WTC11 (cell line): ENCODE measurements at regions of chr2 and their contacts with region 1.

Region 1: GRCh38 chr2:27016801-27017325 is 15.9 kb upstream of the TMEM214 start:
- DNase-seq: peak; percentile 83
- ATAC-seq: peak; percentile 92
- H3K4me3 Mint-ChIP-seq: no peak overlapping the region
- H3K27ac Mint-ChIP-seq: no peak overlapping the region
- H3K4me1 Mint-ChIP-seq: peaks cover 12% of the 10 kb centered on the region
- H3K27me3 Mint-ChIP-seq: peaks cover 11% of the 10 kb centered on the region; the same call in 1 of the 2 replicates
- CTCF ChIP-seq: peak; percentile 71

Region 2: DNA sequence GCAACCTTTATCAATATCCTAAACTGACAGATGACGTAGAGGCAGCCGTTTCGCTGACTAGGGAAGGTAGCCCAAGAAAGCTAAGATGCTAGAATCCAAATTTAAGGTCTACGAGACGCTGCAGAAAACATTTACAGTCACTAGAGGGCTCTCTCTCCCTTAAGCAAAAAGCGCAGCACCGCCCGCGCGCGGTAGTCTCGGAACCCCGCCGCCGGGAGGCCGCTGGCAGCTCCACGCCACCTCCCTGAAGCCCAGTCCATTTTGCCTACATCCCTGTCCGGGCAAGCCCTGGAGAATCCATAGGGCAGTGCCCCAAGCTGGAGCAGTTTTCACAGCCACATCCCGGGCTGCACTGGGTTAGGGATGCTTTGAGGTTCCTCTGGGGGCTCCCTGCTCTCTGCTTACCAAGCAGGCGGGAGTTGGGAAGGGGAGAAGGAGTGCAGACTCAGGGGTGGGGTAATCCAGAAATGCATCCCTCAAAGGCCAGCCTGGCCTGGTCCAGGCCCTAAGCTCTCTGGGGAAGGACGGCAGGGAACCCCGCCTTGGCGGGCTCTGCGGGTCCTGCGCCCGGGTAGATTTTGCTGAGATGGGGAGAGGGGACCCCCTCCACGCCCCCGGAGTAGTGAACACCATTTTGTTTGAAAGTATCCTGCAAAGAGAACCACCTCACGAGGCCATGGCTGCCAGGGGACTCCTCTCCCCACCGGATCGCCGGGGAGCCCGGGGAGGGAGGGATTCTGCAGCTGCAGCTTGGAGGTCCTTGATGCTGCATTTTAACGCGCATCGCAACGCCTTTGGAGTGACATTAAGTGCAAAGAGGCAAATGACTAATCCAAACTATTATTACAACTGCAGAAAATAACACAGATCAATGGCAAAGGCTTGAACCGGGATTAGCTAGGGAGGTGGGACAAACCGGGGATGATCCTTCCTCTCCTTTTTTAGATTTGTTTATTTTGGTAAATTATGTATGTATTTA is 170.2 kb before region 1 on chr2:
- CTCF ChIA-PET with region 1: interaction called, 155 read pairs
- POLR2A ChIA-PET with region 1: interaction called, 6 read pairs
- DNase-seq: peak; percentile 76
- ATAC-seq: peak; percentile 33
- H3K4me3 Mint-ChIP-seq: peak overlapping the region; percentile 79
- H3K27ac Mint-ChIP-seq: no peak overlapping the region
- H3K4me1 Mint-ChIP-seq: peaks cover 9% of the 10 kb centered on the region
- H3K27me3 Mint-ChIP-seq: peaks cover 68% of the 10 kb centered on the region
- CTCF ChIP-seq: peak; percentile 53

Region 3: GRCh38 chr2:26942543-26943295 is 74.1 kb before region 1 on chr2:
- CTCF ChIA-PET with region 1: interaction called, 76 read pairs
- POLR2A ChIA-PET with region 1: no interaction called
- DNase-seq: peak; percentile 87
- ATAC-seq: peak; percentile 78
- H3K4me3 Mint-ChIP-seq: peak overlapping the region; percentile 86
- H3K27ac Mint-ChIP-seq: no peak overlapping the region
- H3K4me1 Mint-ChIP-seq: peaks cover 16% of the 10 kb centered on the region
- H3K27me3 Mint-ChIP-seq: peaks cover 29% of the 10 kb centered on the region
- CTCF ChIP-seq: peak; percentile 96

Region 4: DNA sequence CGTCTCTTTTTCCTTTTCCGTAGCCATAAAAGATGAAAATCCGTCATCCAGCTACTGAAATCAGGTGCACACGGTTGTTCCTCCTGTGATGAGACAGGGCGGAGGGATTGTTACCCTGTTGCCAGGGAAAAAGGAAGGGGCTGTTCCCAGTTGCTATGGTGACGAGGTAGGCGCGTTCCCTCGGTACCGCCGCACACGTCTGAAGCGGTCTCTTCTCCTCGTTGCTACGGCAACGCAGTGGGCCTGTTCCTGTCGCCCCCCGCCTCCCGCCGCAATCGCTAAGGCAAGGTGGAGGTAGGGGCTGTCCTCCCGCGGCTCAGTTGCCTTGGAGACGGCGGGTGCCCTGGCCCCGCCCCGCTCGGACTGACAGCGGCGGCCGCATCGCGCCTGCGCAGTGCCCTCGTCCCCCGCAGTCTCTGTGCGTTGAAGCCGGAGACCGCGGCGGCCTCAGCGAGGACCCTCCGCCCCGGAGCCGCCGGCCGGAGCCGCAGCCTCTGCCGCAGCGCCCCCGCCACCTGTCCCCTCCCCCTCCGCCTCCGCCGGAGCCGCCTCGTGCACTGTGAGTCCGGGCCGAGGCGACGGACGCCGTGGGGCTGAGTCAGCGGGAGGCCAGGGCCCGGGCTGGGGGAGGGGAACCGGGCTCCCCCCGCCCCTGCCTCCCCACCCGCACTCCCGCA is 46.5 kb before region 1 on chr2 and contains the start of gene MAPRE3:
- CTCF ChIA-PET with region 1: interaction called, 596 read pairs
- POLR2A ChIA-PET with region 1: interaction called, 3 read pairs
- DNase-seq: peak; percentile 97
- ATAC-seq: peak; percentile 90
- H3K4me3 Mint-ChIP-seq: peak within 1 kb of the TSS; percentile 93
- H3K27ac Mint-ChIP-seq: no peak within 1 kb of the TSS
- H3K4me1 Mint-ChIP-seq: peaks cover 29% of the 10 kb centered on the region
- H3K27me3 Mint-ChIP-seq: peaks cover 49% of the 10 kb centered on the region
- CTCF ChIP-seq: no peak
- total RNA-seq, gene MAPRE3: 4.9 to 10.3 TPM (median 6.0 TPM) in 3 replicates

Region 5: GRCh38 chr2:26982102-26982742 is 34.6 kb before region 1 on chr2:
- CTCF ChIA-PET with region 1: interaction called, 31 read pairs
- POLR2A ChIA-PET with region 1: no interaction called
- DNase-seq: peak; percentile 30
- ATAC-seq: peak; percentile 96
- H3K4me3 Mint-ChIP-seq: no peak overlapping the region
- H3K27ac Mint-ChIP-seq: no peak overlapping the region
- H3K4me1 Mint-ChIP-seq: no peaks in the 10 kb centered on the region
- H3K27me3 Mint-ChIP-seq: no peaks in the 10 kb centered on the region
- CTCF ChIP-seq: no peak

Region 6: DNA sequence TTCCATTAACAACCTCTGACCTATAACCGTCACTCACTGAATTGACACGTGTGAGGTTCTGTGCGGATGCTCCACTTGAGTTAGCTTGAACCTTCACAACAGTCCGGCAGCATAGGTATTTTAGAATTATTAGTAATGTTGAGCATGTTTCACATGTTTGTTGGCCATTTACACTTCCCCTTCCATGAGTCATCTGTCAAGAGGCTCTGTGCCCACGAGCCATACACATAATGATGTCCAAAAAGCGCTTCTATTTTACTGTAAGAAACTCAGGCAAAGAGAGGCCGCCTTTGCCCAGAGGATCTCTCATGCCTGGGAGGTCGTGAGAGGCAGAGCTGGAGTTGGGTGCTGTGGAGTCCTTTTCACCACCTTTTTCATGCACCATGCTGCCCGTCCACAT is 13.0 kb before region 1 on chr2:
- CTCF ChIA-PET with region 1: interaction called, 30 read pairs
- POLR2A ChIA-PET with region 1: no interaction called
- DNase-seq: no peak
- ATAC-seq: no peak
- H3K4me3 Mint-ChIP-seq: no peak overlapping the region
- H3K27ac Mint-ChIP-seq: no peak overlapping the region
- H3K4me1 Mint-ChIP-seq: peaks cover 6% of the 10 kb centered on the region
- H3K27me3 Mint-ChIP-seq: no peaks in the 10 kb centered on the region
- CTCF ChIP-seq: no peak

Region 7: GRCh38 chr2:27050281-27050995 is 33.6 kb after region 1 on chr2:
- CTCF ChIA-PET with region 1: interaction called, 15 read pairs
- POLR2A ChIA-PET with region 1: interaction called, 4 read pairs
- DNase-seq: peak; percentile 95
- ATAC-seq: peak; percentile 84
- H3K4me3 Mint-ChIP-seq: peak overlapping the region; percentile 93
- H3K27ac Mint-ChIP-seq: peak overlapping the region; percentile 98
- H3K4me1 Mint-ChIP-seq: peaks cover 12% of the 10 kb centered on the region
- H3K27me3 Mint-ChIP-seq: peaks cover 10% of the 10 kb centered on the region
- CTCF ChIP-seq: no peak